Pancreas (tissue), 10 donors: ENCODE measurements at regions of chr3 and their contacts with region 1.

Region 1: GRCh38 chr3:70090322-70090913 is 90.9 kb downstream of the SAMMSON start:
- DNase-seq: no peak
- ATAC-seq: peak in 3 of 4 donors; percentile 75 to 83 (median 80)
- H3K4me3 ChIP-seq: no peak overlapping the region
- H3K27ac ChIP-seq: no peak overlapping the region
- H3K4me1 ChIP-seq: no peaks in the 10 kb centered on the region
- H3K27me3 ChIP-seq: no peaks in the 10 kb centered on the region
- CTCF ChIP-seq: peak; percentile 36 to 81 (median 68)

Region 2: GRCh38 chr3:70360979-70361760 is 270.8 kb after region 1 on chr3:
- intact Hi-C with region 1: loop called in 1 of 3 experiments (anchors 10 kb)
- DNase-seq: no peak
- ATAC-seq: no peak
- H3K4me3 ChIP-seq: no peak overlapping the region
- H3K27ac ChIP-seq: no peak overlapping the region
- H3K4me1 ChIP-seq: no peaks in the 10 kb centered on the region
- H3K27me3 ChIP-seq: no peaks in the 10 kb centered on the region
- CTCF ChIP-seq: no peak